ENCODE measurements at regions of chr10 and their contacts with region 1.

Region 1: GRCh38 chr10:110497438-110498086 is at the start of gene DUSP5:
- DNase-seq: peak; percentile 95 to 97 (median 96)
- H3K4me3 ChIP-seq: peak within 1 kb of the TSS; percentile 56 to 85 (median 74)
- H3K4me3 Mint-ChIP-seq: peak within 1 kb of the TSS; percentile 96 to 98
- H3K27ac ChIP-seq: peak within 1 kb of the TSS; percentile 58 to 79
- H3K27ac Mint-ChIP-seq: peak within 1 kb of the TSS; percentile 66 to 93 (median 91)
- H3K4me1 ChIP-seq: peaks cover 49 to 61% of the 10 kb centered on the region in 2 donors
- H3K4me1 Mint-ChIP-seq: peaks cover 62% of the 10 kb centered on the region
- H3K27me3 ChIP-seq: peaks cover 17 to 41% of the 10 kb centered on the region in 2 donors
- H3K27me3 Mint-ChIP-seq: peaks cover 48 to 61% (median 57%) of the 10 kb centered on the region in 3 donors
- CTCF ChIP-seq: no peak
- polyA plus RNA-seq, gene DUSP5: 2.0 to 65.3 (median 3.9) TPM

Region 2: DNA sequence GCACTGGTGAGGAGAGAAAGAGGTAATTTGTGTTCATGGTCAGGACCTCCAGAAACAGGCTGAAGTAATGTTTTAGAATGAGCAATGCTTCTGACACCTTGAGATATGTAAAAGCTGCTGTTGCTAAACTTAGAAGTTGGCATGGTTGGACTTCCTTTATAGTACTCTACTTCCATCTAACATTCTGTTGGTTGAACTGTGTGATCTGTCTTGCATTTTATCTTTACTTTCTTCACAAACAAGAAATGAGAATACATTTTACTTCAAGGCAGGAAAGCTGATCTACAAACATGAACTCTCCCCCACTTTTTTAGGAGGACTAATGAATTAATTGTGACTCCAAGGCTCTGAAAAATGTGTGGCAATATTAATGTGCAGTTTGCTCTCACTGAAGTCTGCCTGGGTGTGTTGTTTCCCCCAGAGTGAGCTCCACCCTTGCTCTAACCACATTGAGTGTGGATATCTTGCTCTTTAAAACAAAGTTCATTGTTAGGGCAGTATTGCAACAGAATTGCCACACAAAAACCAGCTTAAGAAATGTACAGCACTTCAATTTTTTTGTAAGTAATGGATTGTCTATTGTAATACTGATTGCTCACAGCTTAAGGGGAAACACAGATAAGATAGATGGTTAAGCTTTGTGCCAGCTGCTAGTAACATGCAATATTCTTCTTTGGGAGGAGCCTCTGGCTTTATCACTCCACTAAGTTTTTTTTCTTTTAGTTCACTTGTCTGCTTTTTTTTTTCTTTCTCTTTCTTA is 420.8 kb before region 1 on chr10:
- intact Hi-C with region 1: loop called in 1 of 2 experiments (anchors 10 kb)
- DNase-seq: peak; percentile 94 to 98 (median 94)
- H3K4me3 ChIP-seq: peak overlapping the region; percentile 19 to 60 (median 42)
- H3K4me3 Mint-ChIP-seq: peak overlapping the region; percentile 65 to 82
- H3K27ac ChIP-seq: peak overlapping the region; percentile 73 to 95
- H3K27ac Mint-ChIP-seq: peak overlapping the region; percentile 99 to 100 (median 99)
- H3K4me1 ChIP-seq: peaks cover 78 to 95% of the 10 kb centered on the region in 2 donors
- H3K4me1 Mint-ChIP-seq: peaks cover 69% of the 10 kb centered on the region
- H3K27me3 ChIP-seq: no peaks in the 10 kb centered on the region
- H3K27me3 Mint-ChIP-seq: no peaks in the 10 kb centered on the region
- CTCF ChIP-seq: no peak

Region 3: DNA sequence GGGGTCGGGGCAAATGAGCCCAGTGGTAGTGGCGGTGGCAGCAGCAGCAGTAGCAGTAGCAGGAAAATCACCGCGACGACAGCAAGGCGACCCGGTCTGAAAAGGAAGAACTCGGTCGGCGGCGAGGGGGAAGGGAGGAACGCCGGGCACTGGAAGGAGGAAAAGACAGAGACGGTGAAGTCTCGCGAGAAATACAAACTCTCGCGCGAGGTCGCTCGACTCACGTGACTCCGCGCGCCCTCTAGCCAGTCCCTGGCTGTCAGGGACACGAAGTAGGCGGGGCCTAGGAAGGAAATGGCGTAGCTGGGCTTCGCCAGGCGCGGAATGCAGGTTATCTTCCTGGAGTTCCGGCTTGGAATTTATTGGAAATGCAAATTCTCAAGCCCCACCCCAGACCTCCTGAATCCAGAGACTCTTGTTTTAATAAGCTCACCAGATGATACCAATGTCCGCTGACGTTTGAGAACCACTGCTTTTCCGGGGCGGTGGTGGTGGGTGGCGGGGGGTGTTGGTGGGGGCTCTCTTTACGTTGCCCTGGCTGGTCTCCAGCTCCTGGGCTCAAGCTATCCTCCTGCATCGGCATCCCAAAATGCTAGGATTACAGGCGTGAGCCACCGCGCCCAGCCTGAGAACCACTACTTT is 192.7 kb before region 1 on chr10 and contains the start of gene SMNDC1:
- intact Hi-C with region 1: loop called in 1 of 2 experiments (anchors 5 kb)
- DNase-seq: peak; percentile 97 to 99 (median 97)
- H3K4me3 ChIP-seq: peak within 1 kb of the TSS; percentile 67 to 89 (median 88)
- H3K4me3 Mint-ChIP-seq: peak within 1 kb of the TSS; percentile 94 to 98
- H3K27ac ChIP-seq: peak within 1 kb of the TSS; percentile 77 to 91
- H3K27ac Mint-ChIP-seq: peak within 1 kb of the TSS; percentile 93 to 99 (median 97)
- H3K4me1 ChIP-seq: peaks cover 31 to 55% of the 10 kb centered on the region in 2 donors
- H3K4me1 Mint-ChIP-seq: peaks cover 51% of the 10 kb centered on the region
- H3K27me3 ChIP-seq: no peaks in the 10 kb centered on the region
- H3K27me3 Mint-ChIP-seq: peaks cover 0 to 4% (median 0%) of the 10 kb centered on the region in 3 donors
- CTCF ChIP-seq: no peak
- polyA plus RNA-seq, gene SMNDC1: 15.6 to 18.2 (median 16.4) TPM

Region 4: GRCh38 chr10:110368002-110368401 is 129.6 kb before region 1 on chr10:
- intact Hi-C with region 1: no loop called
- DNase-seq: peak in 1 of 3 donors; percentile 32
- H3K4me3 ChIP-seq: no peak overlapping the region
- H3K4me3 Mint-ChIP-seq: no peak overlapping the region
- H3K27ac ChIP-seq: no peak overlapping the region
- H3K27ac Mint-ChIP-seq: peak overlapping the region in 1 of 7 donors; percentile 42
- H3K4me1 ChIP-seq: no peaks in the 10 kb centered on the region
- H3K4me1 Mint-ChIP-seq: peaks cover 5% of the 10 kb centered on the region
- H3K27me3 ChIP-seq: no peaks in the 10 kb centered on the region
- H3K27me3 Mint-ChIP-seq: peaks cover 0 to 4% (median 0%) of the 10 kb centered on the region in 3 donors
- CTCF ChIP-seq: no peak

Region 5: GRCh38 chr10:110414563-110415309 is 82.8 kb before region 1 on chr10:
- intact Hi-C with region 1: loop called (anchors 5 kb)
- DNase-seq: peak; percentile 79 to 98 (median 88)
- H3K4me3 ChIP-seq: peak overlapping the region in 1 of 3 experiments; percentile 35
- H3K4me3 Mint-ChIP-seq: peak overlapping the region; percentile 17 to 38
- H3K27ac ChIP-seq: peak overlapping the region; percentile 3 to 65
- H3K27ac Mint-ChIP-seq: peak overlapping the region; percentile 19 to 89 (median 72)
- H3K4me1 ChIP-seq: peaks cover 44 to 61% of the 10 kb centered on the region in 2 donors
- H3K4me1 Mint-ChIP-seq: peaks cover 62% of the 10 kb centered on the region
- H3K27me3 ChIP-seq: no peaks in the 10 kb centered on the region
- H3K27me3 Mint-ChIP-seq: peaks cover 1 to 12% (median 3%) of the 10 kb centered on the region in 3 donors
- CTCF ChIP-seq: no peak

Region 6: GRCh38 chr10:110425684-110426293 is 71.8 kb before region 1 on chr10:
- intact Hi-C with region 1: loop called (anchors 5 kb)
- DNase-seq: peak; percentile 79 to 91 (median 85)
- H3K4me3 ChIP-seq: no peak overlapping the region
- H3K4me3 Mint-ChIP-seq: peak overlapping the region in 1 of 2 donors; percentile 4
- H3K27ac ChIP-seq: peak overlapping the region in 1 of 2 donors; percentile 66
- H3K27ac Mint-ChIP-seq: peak overlapping the region; percentile 84 to 96 (median 89)
- H3K4me1 ChIP-seq: peaks cover 61 to 85% of the 10 kb centered on the region in 2 donors
- H3K4me1 Mint-ChIP-seq: peaks cover 81% of the 10 kb centered on the region
- H3K27me3 ChIP-seq: no peaks in the 10 kb centered on the region
- H3K27me3 Mint-ChIP-seq: peaks cover 3 to 9% (median 5%) of the 10 kb centered on the region in 3 donors
- CTCF ChIP-seq: no peak

Region 7: GRCh38 chr10:110535958-110536891 is 38.7 kb after region 1 on chr10:
- intact Hi-C with region 1: loop called (anchors 5 kb)
- DNase-seq: peak; percentile 83 to 98 (median 87)
- H3K4me3 ChIP-seq: no peak overlapping the region
- H3K4me3 Mint-ChIP-seq: peak overlapping the region in 1 of 2 donors; percentile 55
- H3K27ac ChIP-seq: no peak overlapping the region
- H3K27ac Mint-ChIP-seq: peak overlapping the region in 6 of 7 donors; percentile 17 to 88 (median 80)
- H3K4me1 ChIP-seq: peaks cover 11 to 12% of the 10 kb centered on the region in 2 donors
- H3K4me1 Mint-ChIP-seq: peaks cover 18% of the 10 kb centered on the region
- H3K27me3 ChIP-seq: no peaks in the 10 kb centered on the region
- H3K27me3 Mint-ChIP-seq: peaks cover 15 to 22% (median 19%) of the 10 kb centered on the region in 3 donors
- CTCF ChIP-seq: peak; percentile 25

Region 8: DNA sequence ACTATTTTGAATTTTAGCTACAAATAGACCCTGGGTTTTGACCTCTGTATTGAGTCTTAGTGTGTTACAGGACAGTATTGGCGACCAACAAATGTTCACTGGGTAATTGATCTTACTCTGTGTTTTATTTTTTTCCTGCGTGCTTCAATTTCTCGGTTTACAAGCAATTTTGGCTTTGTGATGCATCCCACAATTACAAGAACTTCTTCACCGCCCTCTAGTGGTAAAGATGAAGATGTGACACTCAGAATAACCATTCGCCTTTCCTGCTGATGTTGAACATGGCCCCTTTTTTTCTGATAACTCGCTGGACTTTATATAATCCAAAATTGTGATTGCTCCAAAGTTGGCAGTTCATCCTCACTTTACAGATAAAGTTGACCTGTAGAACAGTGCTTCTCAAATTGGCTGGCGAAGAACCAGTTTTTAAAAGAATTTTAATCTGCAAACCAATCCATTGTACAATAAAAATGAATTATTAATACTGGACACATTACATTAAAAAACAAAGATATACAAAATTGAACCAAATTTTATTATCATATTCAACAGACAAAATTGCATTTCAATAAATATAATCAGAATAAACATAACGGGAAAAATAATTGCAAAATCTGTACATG is 49.7 kb after region 1 on chr10:
- intact Hi-C with region 1: loop called in 1 of 2 experiments (anchors 5 kb)
- DNase-seq: peak; percentile 37 to 67 (median 66)
- H3K4me3 ChIP-seq: no peak overlapping the region
- H3K4me3 Mint-ChIP-seq: no peak overlapping the region
- H3K27ac ChIP-seq: no peak overlapping the region
- H3K27ac Mint-ChIP-seq: no peak overlapping the region
- H3K4me1 ChIP-seq: no peaks in the 10 kb centered on the region
- H3K4me1 Mint-ChIP-seq: peaks cover 2% of the 10 kb centered on the region
- H3K27me3 ChIP-seq: no peaks in the 10 kb centered on the region
- H3K27me3 Mint-ChIP-seq: peaks cover 2 to 6% (median 3%) of the 10 kb centered on the region in 3 donors
- CTCF ChIP-seq: peak; percentile 83